ENCODE measurements at regions of chr1 and their contacts with region 1.

Region 1: DNA sequence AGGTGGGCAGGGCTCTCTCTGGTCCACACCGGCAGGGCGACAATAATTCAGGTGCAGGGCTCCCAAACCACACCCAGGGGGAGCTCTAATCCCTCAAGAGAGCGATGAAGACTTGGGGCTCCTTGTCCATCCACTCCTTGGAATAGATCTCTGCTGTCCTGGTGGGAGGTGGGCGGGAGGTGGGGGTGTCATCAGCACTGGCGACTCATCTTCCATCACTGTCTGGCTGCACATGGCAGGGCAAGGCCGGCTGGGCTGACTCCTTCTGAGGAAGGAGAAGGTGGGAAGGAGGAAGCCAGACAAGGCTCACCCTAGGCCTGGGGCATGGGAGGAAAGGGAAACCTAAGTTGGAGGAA is 29.3 kb downstream of the TNNT2 start:
- DNase-seq: peak in 5 of 10 donors; percentile 27 to 88 (median 71)

Region 2: DNA sequence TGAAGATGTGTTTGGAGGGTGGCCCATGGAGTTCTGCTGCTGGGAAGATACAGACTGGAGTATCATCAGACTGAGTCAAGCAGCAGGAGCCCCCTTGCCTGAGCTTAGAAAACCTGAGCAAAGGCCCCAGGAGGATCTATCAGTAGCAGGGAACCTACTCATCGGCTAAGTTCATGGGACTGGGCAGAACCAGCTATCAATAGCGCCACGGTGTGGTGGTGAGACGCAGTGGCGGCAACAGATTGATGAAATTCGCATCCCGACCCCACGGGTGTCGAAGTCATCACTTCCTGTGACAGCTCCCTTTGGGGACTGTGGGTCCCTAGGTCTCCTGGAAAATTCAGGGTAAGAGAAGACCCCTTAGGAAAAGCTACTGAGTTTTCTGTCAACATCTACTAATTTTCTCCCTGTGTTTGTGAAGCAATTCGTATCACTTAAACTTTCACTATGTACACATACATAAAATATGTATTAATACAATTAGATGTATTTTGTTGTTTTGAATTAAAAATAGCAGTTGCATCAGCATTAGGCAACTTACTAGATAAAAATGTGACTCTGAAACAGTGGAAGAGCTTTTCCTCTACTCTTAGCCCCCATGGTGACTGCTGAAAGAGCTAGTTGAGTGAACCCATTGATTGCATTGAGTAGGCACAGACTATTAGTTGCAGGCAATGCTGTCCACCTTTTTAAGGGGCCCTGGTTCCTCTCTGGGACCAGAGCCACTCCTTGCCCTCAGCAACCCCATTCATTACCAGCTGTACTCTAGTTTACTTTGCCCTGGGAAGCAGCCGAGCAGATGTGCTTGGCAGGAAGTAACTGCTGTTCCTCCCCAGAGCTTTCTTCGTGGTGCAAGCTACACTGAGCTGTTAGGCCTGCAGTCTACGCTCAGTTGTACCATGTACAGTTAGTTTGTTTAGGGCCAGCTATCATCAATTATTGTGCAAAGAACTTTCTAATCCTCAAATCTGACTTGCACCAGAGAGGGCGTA is 228.7 kb before region 1 on chr1:
- intact Hi-C with region 1: no loop called
- DNase-seq: peak in 9 of 10 donors; percentile 44 to 94 (median 59)

Region 3: DNA sequence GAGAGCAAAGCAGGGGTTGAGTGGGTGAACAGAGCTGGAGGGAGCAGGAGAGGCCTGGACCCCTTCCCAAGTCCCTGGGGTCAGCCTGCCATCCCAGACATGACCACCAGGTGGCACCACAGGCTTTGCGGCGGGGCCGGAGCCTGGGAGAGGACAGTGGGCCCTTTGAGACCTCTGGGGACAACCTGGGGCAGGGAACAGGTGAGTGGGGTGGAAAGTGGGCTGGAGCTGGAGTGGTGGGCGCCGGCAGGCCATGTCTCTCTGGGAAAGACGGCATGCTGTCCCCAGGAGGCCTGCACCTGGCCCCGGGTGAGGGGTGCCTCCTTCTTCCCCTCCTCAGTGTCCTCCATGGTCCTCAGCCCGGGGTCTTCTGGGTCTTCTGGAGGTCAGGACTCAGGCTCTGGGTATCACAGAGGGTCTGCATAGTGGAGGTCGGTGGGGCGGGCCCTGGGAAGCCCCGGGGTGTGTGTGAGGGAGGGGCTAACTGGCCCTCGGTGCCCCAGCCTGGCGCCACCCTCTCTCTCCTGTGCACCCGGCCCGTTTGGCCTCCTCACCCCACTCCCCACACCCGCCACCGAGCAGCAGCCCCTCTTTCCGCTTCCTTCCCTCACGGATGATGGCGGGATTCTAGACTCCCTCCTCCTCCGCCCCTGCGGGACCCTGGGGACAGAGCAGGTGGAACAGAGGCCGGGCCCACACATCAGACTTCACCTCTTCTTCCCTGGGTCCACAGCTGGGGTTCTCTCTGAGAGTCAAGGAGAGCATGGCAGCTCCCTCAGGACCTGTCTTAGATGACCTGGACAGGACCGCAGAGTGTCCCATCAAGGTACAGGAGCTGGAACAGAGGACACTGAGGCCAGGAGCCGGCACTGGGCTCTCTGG is 93.3 kb before region 1 on chr1:
- intact Hi-C with region 1: loop called (anchors 5 kb)
- DNase-seq: peak in 8 of 10 donors; percentile 51 to 95 (median 82)